ENCODE measurements at regions of chr7 and their contacts with region 1.

Region 1: GRCh38 chr7:149060156-149060555 is 30.4 kb downstream of the ZNF786 start:
- DNase-seq: no peak
- ATAC-seq: no peak
- H3K4me3 ChIP-seq: no peak overlapping the region
- H3K27ac ChIP-seq: no peak overlapping the region
- H3K4me1 ChIP-seq: no peaks in the 10 kb centered on the region
- H3K27me3 ChIP-seq: no peaks in the 10 kb centered on the region
- CTCF ChIP-seq: no peak

Region 2: GRCh38 chr7:149084407-149084806 is 24.3 kb after region 1 on chr7:
- CTCF ChIA-PET with region 1: interaction called, 11 read pairs
- POLR2A ChIA-PET with region 1: no interaction called
- in situ Hi-C with region 1: no loop called
- intact Hi-C with region 1: no loop called
- DNase-seq: no peak
- ATAC-seq: no peak
- H3K4me3 ChIP-seq: no peak overlapping the region
- H3K27ac ChIP-seq: no peak overlapping the region
- H3K4me1 ChIP-seq: no peaks in the 10 kb centered on the region
- H3K27me3 ChIP-seq: no peaks in the 10 kb centered on the region
- CTCF ChIP-seq: no peak

Region 3: GRCh38 chr7:149195180-149196150 is 135.3 kb after region 1 on chr7 and contains the start of gene ZNF282:
- CTCF ChIA-PET with region 1: no interaction called
- POLR2A ChIA-PET with region 1: no interaction called
- in situ Hi-C with region 1: no loop called
- intact Hi-C with region 1: no loop called
- DNase-seq: peak; percentile 67
- ATAC-seq: peak; percentile 96
- H3K4me3 ChIP-seq: peak within 1 kb of the TSS; percentile 93 to 98
- H3K27ac ChIP-seq: peak within 1 kb of the TSS; percentile 93
- H3K4me1 ChIP-seq: peaks cover 9% of the 10 kb centered on the region
- H3K27me3 ChIP-seq: no peaks in the 10 kb centered on the region
- CTCF ChIP-seq: peak; percentile 90
- total RNA-seq, gene ZNF282: 31.6 TPM